ENCODE measurements at regions of chr14 and their contacts with region 1.

Region 1: GRCh38 chr14:79056879-79057278 is 886.7 kb downstream of the NRXN3 start:
- DNase-seq: no peak
- H3K4me3 ChIP-seq: no peak overlapping the region
- H3K27ac ChIP-seq: peak overlapping the region in 2 of 4 donors; percentile 4 to 43
- H3K4me1 ChIP-seq: peaks cover 0 to 26% (median 16%) of the 10 kb centered on the region in 4 donors
- H3K27me3 ChIP-seq: no peaks in the 10 kb centered on the region
- CTCF ChIP-seq: no peak
- EP300 ChIP-seq: no peak
- POLR2A ChIP-seq: no peak

Region 2: DNA sequence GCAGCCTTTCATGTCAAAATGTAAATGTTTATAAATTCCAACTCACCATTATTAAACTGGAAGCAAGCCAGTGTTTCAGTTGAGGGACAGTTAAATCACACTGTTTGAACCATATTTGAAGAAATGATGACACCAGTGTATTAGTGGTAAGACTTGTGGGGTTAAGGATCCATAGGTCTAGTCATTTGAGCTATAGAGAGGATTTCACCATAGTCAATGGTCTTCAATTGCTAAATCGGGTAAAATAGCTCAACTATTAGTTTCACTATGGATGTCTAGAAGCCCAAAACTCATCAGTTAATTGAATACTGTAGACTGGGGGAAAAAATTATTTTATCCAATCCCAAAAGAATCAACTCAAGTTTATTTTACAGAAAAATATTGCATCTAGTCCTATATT is 227.6 kb before region 1 on chr14:
- intact Hi-C with region 1: no loop called
- DNase-seq: no peak
- H3K4me3 ChIP-seq: no peak overlapping the region
- H3K27ac ChIP-seq: no peak overlapping the region
- H3K4me1 ChIP-seq: no peaks in the 10 kb centered on the region
- H3K27me3 ChIP-seq: peaks cover 0 to 13% (median 0%) of the 10 kb centered on the region in 4 donors
- CTCF ChIP-seq: no peak
- EP300 ChIP-seq: no peak
- POLR2A ChIP-seq: no peak

Region 3: DNA sequence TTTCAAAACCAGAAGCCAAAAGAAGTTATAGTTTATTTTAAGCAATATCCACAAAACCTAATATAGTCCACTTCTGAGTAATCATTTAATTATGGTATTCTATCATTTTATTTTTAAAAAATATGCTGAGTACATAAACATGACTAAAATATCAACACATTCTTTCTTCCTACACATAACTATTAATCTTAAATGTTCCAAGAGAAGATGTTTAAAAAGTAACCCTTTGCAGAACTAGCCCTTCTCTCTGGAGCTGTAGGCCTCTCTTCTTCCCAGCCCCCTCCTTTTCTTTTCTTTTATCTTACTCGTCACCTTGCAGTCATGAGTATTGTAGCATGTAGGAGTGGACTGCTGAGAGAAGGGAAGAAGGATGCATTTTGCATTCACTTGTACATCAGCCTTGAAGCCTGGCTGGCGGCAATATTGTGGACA is 55.1 kb after region 1 on chr14:
- intact Hi-C with region 1: loop called (anchors 10 kb)
- DNase-seq: peak; percentile 39
- H3K4me3 ChIP-seq: no peak overlapping the region
- H3K27ac ChIP-seq: peak overlapping the region; percentile 69 to 74 (median 70)
- H3K4me1 ChIP-seq: peaks cover 0 to 41% (median 32%) of the 10 kb centered on the region in 4 donors
- H3K27me3 ChIP-seq: no peaks in the 10 kb centered on the region
- CTCF ChIP-seq: no peak
- EP300 ChIP-seq: no peak
- POLR2A ChIP-seq: no peak

Region 4: DNA sequence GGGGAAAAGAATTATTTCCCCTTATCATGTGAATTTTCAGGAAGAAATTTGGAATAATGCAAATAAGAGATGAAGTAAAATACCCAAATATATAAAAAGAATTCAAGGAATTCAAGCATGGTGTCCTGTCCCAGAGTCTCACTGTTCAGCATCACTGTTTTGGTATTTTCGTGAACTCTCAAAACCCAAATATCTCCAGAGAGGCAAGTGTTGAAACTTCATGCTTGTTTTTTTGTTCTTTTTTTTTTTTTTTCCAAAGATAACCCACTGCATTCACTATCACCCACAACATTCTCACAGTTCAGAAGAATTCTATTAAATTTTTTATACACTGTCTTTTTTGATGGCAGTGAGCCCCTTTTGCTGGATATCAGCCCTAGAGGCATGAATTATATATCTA is 799.5 kb after region 1 on chr14:
- intact Hi-C with region 1: no loop called
- DNase-seq: no peak
- H3K4me3 ChIP-seq: no peak overlapping the region
- H3K27ac ChIP-seq: no peak overlapping the region
- H3K4me1 ChIP-seq: no peaks in the 10 kb centered on the region
- H3K27me3 ChIP-seq: no peaks in the 10 kb centered on the region
- CTCF ChIP-seq: no peak
- EP300 ChIP-seq: no peak
- POLR2A ChIP-seq: no peak

Measured in esophagus muscularis mucosa (tissue), 4 donors.